ENCODE measurements at regions of chr4 and their contacts with region 1.

Region 1: GRCh38 chr4:88185906-88186305 is 27.5 kb upstream of the ABCG2 start:
- DNase-seq: no peak
- ATAC-seq: no peak
- H3K4me3 ChIP-seq: no peak overlapping the region
- H3K27ac ChIP-seq: no peak overlapping the region
- H3K4me1 ChIP-seq: no peaks in the 10 kb centered on the region
- H3K27me3 ChIP-seq: no peaks in the 10 kb centered on the region

Region 2: DNA sequence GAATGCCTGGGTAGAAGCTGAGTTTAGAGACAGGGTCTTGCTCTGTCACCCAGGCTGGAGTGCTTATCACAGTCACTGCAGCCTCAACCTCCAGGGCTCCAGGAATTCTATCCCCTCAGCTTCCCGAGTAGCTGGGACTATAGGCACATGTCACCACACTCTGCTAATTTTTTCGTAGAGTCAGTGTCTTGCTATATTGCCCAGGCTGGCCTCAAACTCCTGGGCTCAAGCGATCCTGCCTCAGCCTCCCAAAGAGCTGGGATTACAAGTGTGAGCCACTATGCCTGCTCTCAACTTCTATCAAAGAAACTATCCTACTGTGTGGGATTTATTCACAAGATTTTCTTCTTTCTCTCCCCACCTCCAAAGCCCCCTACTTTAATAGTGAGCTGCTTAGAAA is 1841.8 kb before region 1 on chr4:
- intact Hi-C with region 1: loop called in 1 of 4 experiments (anchors 10 kb)
- DNase-seq: no peak
- ATAC-seq: no peak
- H3K4me3 ChIP-seq: no peak overlapping the region
- H3K27ac ChIP-seq: no peak overlapping the region
- H3K4me1 ChIP-seq: no peaks in the 10 kb centered on the region
- H3K27me3 ChIP-seq: no peaks in the 10 kb centered on the region

Region 3: DNA sequence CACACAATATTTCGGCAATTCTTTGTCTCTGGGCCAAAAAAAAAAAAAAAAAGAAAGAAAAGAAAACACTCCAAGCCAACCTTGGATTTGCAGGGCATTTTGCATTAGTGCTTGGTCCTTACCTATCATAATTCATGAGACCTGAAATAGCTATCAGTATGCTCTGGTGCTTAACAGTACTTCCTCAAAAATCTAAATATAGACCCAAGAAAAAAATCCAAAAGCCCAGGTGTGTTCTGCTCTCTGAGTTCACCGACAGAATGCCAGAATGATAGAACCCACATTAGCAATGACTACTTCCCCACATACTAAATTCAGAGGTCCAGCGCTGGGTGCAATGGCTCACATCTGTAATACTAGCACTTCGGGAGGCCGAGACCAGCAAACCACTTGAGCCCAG is 70.3 kb before region 1 on chr4:
- intact Hi-C with region 1: no loop called
- DNase-seq: no peak
- ATAC-seq: no peak
- H3K4me3 ChIP-seq: no peak overlapping the region
- H3K27ac ChIP-seq: no peak overlapping the region
- H3K4me1 ChIP-seq: no peaks in the 10 kb centered on the region
- H3K27me3 ChIP-seq: no peaks in the 10 kb centered on the region